ENCODE measurements at regions of chr19 and their contacts with region 1.

Region 1: DNA sequence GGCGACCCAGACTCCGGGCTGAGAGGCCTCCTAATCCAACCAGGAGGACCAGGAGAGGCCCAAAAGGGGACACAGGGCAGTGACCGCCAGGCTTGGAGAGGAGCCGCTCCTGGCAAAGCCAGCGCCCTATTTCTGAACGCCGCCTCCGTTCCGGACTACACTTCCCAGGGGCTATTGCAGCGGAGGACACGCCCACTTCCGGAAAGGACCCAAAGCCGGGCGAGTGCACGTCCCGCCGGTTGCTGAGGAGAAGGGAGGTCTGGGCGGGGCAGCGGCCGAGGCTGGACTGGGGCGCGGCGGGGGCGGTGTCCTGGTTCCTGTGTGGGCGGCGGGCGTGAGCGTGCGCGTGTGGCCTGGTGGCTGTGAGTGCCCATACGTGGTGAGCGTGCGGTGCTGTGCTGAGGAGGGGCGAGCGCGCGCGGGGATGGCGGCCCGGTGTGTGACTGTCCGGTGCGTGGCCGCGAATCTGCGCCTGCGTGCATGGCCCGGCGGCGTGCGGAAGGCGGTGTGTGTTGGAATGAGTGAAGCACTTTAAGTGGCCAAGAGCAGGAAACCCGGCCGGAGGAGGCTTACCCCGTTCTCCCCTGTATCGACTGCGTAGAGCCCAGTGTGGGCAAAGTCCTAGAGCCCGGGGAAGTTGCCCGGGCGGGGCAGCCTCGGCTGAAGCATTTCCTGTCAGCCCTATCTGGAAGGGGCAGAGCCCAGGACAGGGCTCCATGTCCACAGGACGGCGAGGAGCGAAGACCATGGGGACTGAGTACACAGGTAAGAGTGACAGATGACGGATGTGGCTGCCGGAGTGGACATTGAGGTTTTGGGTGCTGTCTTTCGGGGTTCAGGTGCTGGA is at the start of gene ZNF470:
- DNase-seq: peak; percentile 82
- H3K4me3 Mint-ChIP-seq: peak within 1 kb of the TSS; percentile 91
- H3K27ac Mint-ChIP-seq: peak within 1 kb of the TSS; percentile 90
- H3K4me1 Mint-ChIP-seq: peaks cover 2% of the 10 kb centered on the region
- H3K27me3 Mint-ChIP-seq: no peaks in the 10 kb centered on the region
- total RNA-seq, gene ZNF470: 2.1 and 3.3 TPM in 2 replicates

Region 2: GRCh38 chr19:56403764-56404704 is 163.5 kb before region 1 on chr19 and contains the start of gene ZNF583:
- intact Hi-C with region 1: loop called (anchors 10 kb)
- DNase-seq: peak; percentile 86
- H3K4me3 Mint-ChIP-seq: peak within 1 kb of the TSS; percentile 85
- H3K27ac Mint-ChIP-seq: peak within 1 kb of the TSS; percentile 96
- H3K4me1 Mint-ChIP-seq: peaks cover 14% of the 10 kb centered on the region
- H3K27me3 Mint-ChIP-seq: no peaks in the 10 kb centered on the region
- total RNA-seq, gene ZNF583: 1.5 and 1.7 TPM in 2 replicates

Region 3: GRCh38 chr19:56538254-56538760 is 29.2 kb before region 1 on chr19:
- intact Hi-C with region 1: loop called (anchors 1 kb)
- DNase-seq: peak; percentile 80
- H3K4me3 Mint-ChIP-seq: peak overlapping the region; percentile 81
- H3K27ac Mint-ChIP-seq: peak overlapping the region; percentile 85
- H3K4me1 Mint-ChIP-seq: peaks cover 3% of the 10 kb centered on the region
- H3K27me3 Mint-ChIP-seq: no peaks in the 10 kb centered on the region

Region 4: DNA sequence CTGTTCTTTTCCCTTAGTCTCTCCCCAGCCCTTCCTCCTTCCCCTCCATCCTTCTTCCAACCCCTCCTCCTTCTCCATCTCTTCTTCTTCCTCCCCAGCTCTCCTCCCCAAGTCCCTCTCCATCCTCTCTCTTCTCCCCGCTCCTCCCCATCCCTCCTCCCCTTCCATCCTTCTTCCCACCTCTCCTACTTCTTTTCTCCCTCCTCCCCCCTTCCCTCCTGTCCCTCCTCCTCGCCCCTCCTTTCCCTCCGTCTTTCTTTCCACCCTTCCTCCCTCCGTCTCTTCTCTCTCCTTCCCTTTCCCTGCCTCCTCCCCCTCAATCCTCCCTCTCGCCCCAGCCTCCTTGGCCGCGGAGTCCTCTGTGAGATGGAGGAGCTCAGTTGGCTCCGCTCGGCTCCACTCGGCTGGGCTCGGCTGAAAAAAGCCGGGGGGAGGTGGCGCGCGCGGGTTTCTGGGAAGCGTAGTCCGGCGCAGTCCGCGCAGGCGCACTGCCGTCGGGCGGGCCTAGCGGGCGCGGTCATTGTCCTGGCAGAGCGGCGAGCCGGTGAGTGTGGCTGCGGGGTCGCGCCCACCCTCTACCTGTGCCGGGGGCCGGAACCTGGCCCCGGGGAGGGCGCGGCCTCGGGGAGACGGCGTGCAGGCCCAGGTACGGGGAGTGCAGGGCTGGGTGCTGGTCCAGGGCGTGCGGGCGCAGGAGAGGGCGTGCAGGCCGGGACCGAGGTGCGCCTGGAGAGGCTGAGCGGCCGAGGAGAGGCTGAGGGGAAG is 27.5 kb after region 1 on chr19 and contains the start of gene ZNF71:
- intact Hi-C with region 1: loop called (anchors 1 kb)
- DNase-seq: peak; percentile 82
- H3K4me3 Mint-ChIP-seq: peak within 1 kb of the TSS; percentile 97
- H3K27ac Mint-ChIP-seq: peak within 1 kb of the TSS; percentile 70
- H3K4me1 Mint-ChIP-seq: peaks cover 12% of the 10 kb centered on the region
- H3K27me3 Mint-ChIP-seq: no peaks in the 10 kb centered on the region
- total RNA-seq, gene ZNF71: 4.9 and 5.4 TPM in 2 replicates